GM23248 (cell line): ENCODE measurements at regions of chr1 and their contacts with region 1.

Region 1: DNA sequence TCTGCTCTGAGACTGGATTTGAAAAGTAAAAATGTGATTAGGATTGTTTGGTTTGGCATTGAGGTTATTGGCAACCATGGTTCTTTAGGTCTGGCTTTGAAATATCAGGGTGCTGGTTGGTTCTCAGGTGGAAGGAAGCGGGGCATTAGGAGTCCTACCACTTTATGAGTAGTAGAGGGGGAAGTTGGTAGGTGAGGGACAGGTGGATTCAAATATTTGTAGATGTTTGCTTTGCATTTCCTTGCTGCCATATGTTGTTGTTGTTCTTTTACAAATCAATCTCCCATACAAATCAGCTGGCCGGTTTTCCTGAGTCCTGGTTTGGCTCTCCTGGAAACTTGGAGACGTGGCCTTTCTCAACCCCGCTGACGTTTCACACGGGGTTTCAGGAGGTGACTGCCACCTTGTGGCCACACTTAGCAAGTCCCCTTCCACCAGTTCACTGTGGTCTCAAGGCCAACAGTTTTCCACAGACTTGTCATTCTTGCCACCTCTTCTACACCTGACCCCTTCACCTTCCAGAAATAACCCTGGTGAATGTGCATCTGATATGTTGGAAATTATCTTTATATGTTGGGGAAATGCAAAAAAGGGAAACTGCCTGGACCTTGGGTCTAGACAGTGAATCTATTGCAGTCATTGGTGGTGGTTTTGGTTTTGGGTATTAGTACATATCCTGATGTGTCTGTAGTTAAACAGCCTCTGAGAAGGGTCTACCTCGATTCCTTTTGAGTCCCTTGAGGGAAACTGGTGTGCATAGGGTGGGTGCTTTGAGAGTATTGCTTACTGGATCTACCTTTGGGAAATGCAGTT is 127.0 kb upstream of the KIAA0040 start:
- DNase-seq: peak; percentile 83
- H3K4me3 ChIP-seq: no peak overlapping the region
- H3K27ac ChIP-seq: no peak overlapping the region
- H3K4me1 ChIP-seq: no peaks in the 10 kb centered on the region
- H3K27me3 ChIP-seq: no peaks in the 10 kb centered on the region; the same call in 1 of the 2 replicates

Region 2: GRCh38 chr1:175035865-175036264 is 283.8 kb before region 1 on chr1:
- in situ Hi-C with region 1: loop called (anchors 10 kb)
- DNase-seq: no peak
- H3K4me3 ChIP-seq: no peak overlapping the region
- H3K27ac ChIP-seq: no peak overlapping the region
- H3K4me1 ChIP-seq: no peaks in the 10 kb centered on the region
- H3K27me3 ChIP-seq: peaks cover 9% of the 10 kb centered on the region

Region 3: GRCh38 chr1:175146529-175147213 is 173.0 kb before region 1 on chr1:
- in situ Hi-C with region 1: no loop called
- DNase-seq: peak; percentile 68
- H3K4me3 ChIP-seq: no peak overlapping the region
- H3K27ac ChIP-seq: no peak overlapping the region
- H3K4me1 ChIP-seq: peaks cover 7% of the 10 kb centered on the region
- H3K27me3 ChIP-seq: no peaks in the 10 kb centered on the region

Region 4: DNA sequence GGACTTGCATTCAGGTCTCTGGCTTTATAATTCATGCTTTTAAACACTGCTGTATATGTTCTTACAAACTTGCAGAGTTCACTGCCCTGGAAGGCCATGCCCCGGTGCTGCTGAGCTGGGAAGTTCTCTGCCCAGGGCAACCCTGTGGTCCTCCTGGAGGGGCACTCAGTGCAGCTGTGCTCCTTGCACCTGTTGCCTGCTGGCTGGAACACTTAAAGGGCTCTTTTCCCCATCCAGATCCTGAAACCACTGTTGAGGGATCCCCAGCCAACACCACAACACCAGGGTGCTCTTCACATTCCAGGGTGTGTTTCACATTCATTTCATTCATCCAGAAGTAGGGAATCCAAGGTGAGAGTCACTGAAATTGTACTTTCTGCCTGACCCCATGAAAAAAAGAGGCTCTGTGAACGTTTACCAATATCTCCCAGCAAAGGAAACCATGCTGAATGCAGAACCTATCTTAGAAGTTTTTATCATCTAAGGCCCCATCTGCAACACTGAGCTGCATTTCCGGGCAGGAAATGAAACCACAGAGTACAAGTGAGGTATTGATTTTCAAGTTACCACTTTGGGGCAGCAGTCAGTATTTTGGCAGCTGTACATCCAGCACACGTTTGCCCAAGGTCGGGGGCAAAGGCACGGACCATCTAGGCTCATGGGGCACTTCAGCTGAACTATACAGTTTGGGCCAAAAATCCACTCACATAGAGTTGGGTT is 110.7 kb before region 1 on chr1:
- in situ Hi-C with region 1: no loop called
- DNase-seq: no peak
- H3K4me3 ChIP-seq: no peak overlapping the region
- H3K27ac ChIP-seq: no peak overlapping the region
- H3K4me1 ChIP-seq: no peaks in the 10 kb centered on the region
- H3K27me3 ChIP-seq: no peaks in the 10 kb centered on the region

Region 5: GRCh38 chr1:175628548-175629317 is 309.1 kb after region 1 on chr1:
- in situ Hi-C with region 1: no loop called
- DNase-seq: no peak
- H3K4me3 ChIP-seq: no peak overlapping the region
- H3K27ac ChIP-seq: no peak overlapping the region
- H3K4me1 ChIP-seq: no peaks in the 10 kb centered on the region
- H3K27me3 ChIP-seq: no peaks in the 10 kb centered on the region